CD14-positive monocyte (primary cell): ENCODE measurements at regions of chr7 and their contacts with region 1.

Region 1: GRCh38 chr7:52423251-52423650 is 612.2 kb upstream of the POM121L12 start:
- DNase-seq: no peak
- H3K4me3 ChIP-seq: no peak overlapping the region
- H3K4me3 Mint-ChIP-seq: no peak overlapping the region
- H3K27ac ChIP-seq: no peak overlapping the region
- H3K27ac Mint-ChIP-seq: no peak overlapping the region
- H3K4me1 ChIP-seq: no peaks in the 10 kb centered on the region
- H3K4me1 Mint-ChIP-seq: no peaks in the 10 kb centered on the region
- H3K27me3 ChIP-seq: no peaks in the 10 kb centered on the region
- H3K27me3 Mint-ChIP-seq: no peaks in the 10 kb centered on the region
- CTCF ChIP-seq: no peak

Region 2: GRCh38 chr7:52362521-52362920 is 60.7 kb before region 1 on chr7:
- intact Hi-C with region 1: loop called in 1 of 2 experiments (anchors 10 kb)
- DNase-seq: no peak
- H3K4me3 ChIP-seq: no peak overlapping the region
- H3K4me3 Mint-ChIP-seq: no peak overlapping the region
- H3K27ac ChIP-seq: no peak overlapping the region
- H3K27ac Mint-ChIP-seq: no peak overlapping the region
- H3K4me1 ChIP-seq: no peaks in the 10 kb centered on the region
- H3K4me1 Mint-ChIP-seq: no peaks in the 10 kb centered on the region
- H3K27me3 ChIP-seq: no peaks in the 10 kb centered on the region
- H3K27me3 Mint-ChIP-seq: peaks cover 0 to 2% (median 2%) of the 10 kb centered on the region in 3 donors
- CTCF ChIP-seq: no peak